AG04449 (cell line): ENCODE measurements at regions of chr5 and their contacts with region 1.

Region 1: DNA sequence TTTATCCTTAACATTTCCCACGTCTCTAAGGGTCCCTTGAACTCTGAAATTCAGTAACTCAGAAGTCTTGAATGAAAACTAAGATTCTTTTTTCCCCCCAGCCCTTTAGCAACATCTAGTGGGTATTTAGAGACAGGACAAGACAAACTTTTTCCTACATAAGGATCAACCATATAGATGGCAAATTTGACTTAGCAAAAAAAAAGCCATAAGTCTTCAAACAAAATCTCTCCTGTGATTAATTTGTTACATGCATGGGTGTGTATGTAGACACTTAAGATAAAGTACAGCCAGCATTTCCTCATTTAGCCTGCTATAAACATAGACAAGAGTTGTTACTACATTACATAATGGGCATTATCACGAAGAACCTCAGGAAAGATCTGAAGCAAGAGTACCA is 29.1 kb upstream of the ANKRD31 start:
- DNase-seq: peak; percentile 9
- H3K4me3 ChIP-seq: no peak overlapping the region
- CTCF ChIP-seq: peak; percentile 30

Region 2: DNA sequence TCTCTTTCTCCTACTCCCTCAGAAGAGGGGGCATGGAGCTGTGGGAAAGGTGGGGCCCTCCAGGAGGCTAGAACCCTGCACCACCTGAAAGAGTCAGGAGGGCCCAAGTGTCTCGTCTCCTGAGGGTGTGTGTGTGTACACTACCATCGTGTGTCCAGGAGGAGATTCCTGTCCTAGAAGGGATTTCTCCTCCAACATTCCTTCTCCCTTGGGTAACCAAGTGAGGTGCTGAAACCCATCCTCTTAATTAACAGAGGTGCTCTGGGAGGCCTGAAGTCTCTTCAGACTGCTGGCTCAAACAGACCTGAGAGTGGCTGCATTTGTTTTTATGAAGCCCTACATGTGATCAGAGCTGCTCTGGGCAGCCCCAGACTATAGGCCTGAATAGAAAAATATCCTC is 338.4 kb before region 1 on chr5:
- CTCF ChIA-PET with region 1: interaction called, 25 read pairs
- POLR2A ChIA-PET with region 1: no interaction called
- DNase-seq: no peak
- H3K4me3 ChIP-seq: no peak overlapping the region
- CTCF ChIP-seq: no peak